ENCODE measurements at regions of chr4 and their contacts with region 1.

Region 1: GRCh38 chr4:57119054-57119651 is 9.0 kb upstream of the IGFBP7 start:
- DNase-seq: peak; percentile 95
- H3K4me3 Mint-ChIP-seq: peak overlapping the region; percentile 65
- H3K27ac Mint-ChIP-seq: peak overlapping the region; percentile 96
- H3K4me1 Mint-ChIP-seq: peaks cover 27% of the 10 kb centered on the region
- H3K27me3 Mint-ChIP-seq: no peaks in the 10 kb centered on the region
- CTCF ChIP-seq: no peak

Region 2: DNA sequence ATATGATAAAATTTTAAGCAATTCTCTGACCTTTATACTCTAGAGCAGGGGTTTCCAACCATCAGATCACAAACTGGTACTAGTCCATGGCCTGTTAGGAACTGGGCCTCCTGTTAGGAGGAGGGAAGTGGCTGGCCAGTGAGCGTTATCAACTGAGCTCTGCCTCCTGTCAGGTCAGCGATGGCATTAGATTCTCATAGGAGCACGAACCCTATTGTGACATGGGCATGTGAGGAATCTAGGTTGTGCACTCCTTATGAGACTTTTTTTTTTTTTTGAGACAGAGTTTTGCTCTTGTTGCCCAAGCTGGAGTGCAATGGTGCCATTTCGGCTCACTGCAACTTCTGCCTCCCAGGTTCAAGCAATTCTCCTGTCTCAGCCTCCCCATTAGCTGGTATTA is 305.8 kb before region 1 on chr4:
- CTCF ChIA-PET with region 1: no interaction called
- POLR2A ChIA-PET with region 1: no interaction called
- intact Hi-C with region 1: no loop called
- DNase-seq: no peak
- H3K4me3 Mint-ChIP-seq: no peak overlapping the region
- H3K27ac Mint-ChIP-seq: no peak overlapping the region
- H3K4me1 Mint-ChIP-seq: no peaks in the 10 kb centered on the region
- H3K27me3 Mint-ChIP-seq: no peaks in the 10 kb centered on the region
- CTCF ChIP-seq: no peak

Region 3: GRCh38 chr4:57148831-57149505 is 29.8 kb after region 1 on chr4:
- CTCF ChIA-PET with region 1: interaction called, 3 read pairs
- POLR2A ChIA-PET with region 1: interaction called, 10 read pairs
- intact Hi-C with region 1: no loop called
- DNase-seq: peak; percentile 63
- H3K4me3 Mint-ChIP-seq: no peak overlapping the region
- H3K27ac Mint-ChIP-seq: no peak overlapping the region
- H3K4me1 Mint-ChIP-seq: peaks cover 24% of the 10 kb centered on the region
- H3K27me3 Mint-ChIP-seq: no peaks in the 10 kb centered on the region
- CTCF ChIP-seq: no peak